ENCODE measurements at regions of chr6 and their contacts with region 1.

Region 1: GRCh38 chr6:56595490-56596122 is 47.1 kb downstream of the DST start:
- DNase-seq: peak; percentile 76
- H3K4me3 ChIP-seq: no peak overlapping the region
- H3K27ac ChIP-seq: no peak overlapping the region
- H3K4me1 ChIP-seq: no peaks in the 10 kb centered on the region
- H3K27me3 ChIP-seq: no peaks in the 10 kb centered on the region
- CTCF ChIP-seq: peak; percentile 54 to 61
- POLR2A ChIP-seq: no peak

Region 2: GRCh38 chr6:56314683-56315523 is 280.7 kb before region 1 on chr6:
- CTCF ChIA-PET with region 1: interaction called, 110 read pairs
- POLR2A ChIA-PET with region 1: no interaction called
- dilution Hi-C with region 1: no loop called
- intact Hi-C with region 1: loop called (anchors 1 kb)
- DNase-seq: peak; percentile 72
- H3K4me3 ChIP-seq: no peak overlapping the region
- H3K27ac ChIP-seq: no peak overlapping the region
- H3K4me1 ChIP-seq: no peaks in the 10 kb centered on the region
- H3K27me3 ChIP-seq: no peaks in the 10 kb centered on the region
- CTCF ChIP-seq: peak; percentile 62 to 67
- POLR2A ChIP-seq: no peak

Region 3: DNA sequence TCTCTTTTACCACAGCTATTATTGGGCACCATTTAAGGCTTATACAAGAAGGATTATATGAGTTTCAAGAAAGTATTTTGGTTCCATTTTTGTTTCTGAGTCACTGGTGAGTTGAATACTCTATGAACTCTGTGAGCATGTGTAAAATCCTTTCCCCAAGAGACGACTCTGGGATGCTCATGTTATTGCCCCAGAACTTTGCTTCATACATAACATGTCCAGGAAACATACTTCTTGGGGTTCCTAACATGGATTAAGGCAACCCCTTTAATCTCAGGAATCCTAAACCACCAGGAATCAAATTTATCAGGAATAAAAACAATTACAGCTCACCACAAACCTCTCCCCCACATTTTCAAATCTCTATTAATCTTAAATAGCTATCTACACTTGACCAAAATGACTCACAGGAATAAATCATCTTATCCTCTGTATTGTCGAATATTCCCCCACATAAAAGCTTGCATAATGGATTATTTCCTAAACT is 230.7 kb before region 1 on chr6:
- CTCF ChIA-PET with region 1: interaction called, 68 read pairs
- POLR2A ChIA-PET with region 1: no interaction called
- dilution Hi-C with region 1: no loop called
- intact Hi-C with region 1: no loop called
- DNase-seq: peak; percentile 48
- H3K4me3 ChIP-seq: no peak overlapping the region
- H3K27ac ChIP-seq: peak overlapping the region; percentile 16
- H3K4me1 ChIP-seq: peaks cover 76% of the 10 kb centered on the region
- H3K27me3 ChIP-seq: no peaks in the 10 kb centered on the region
- CTCF ChIP-seq: no peak
- POLR2A ChIP-seq: no peak

Region 4: GRCh38 chr6:56549014-56549413 is 46.6 kb before region 1 on chr6:
- CTCF ChIA-PET with region 1: interaction called, 22 read pairs
- POLR2A ChIA-PET with region 1: no interaction called
- dilution Hi-C with region 1: no loop called
- intact Hi-C with region 1: no loop called
- DNase-seq: peak; percentile 64
- H3K4me3 ChIP-seq: no peak overlapping the region
- H3K27ac ChIP-seq: no peak overlapping the region
- H3K4me1 ChIP-seq: no peaks in the 10 kb centered on the region
- H3K27me3 ChIP-seq: no peaks in the 10 kb centered on the region
- CTCF ChIP-seq: peak in 1 of 2 donors; percentile 32
- POLR2A ChIP-seq: no peak

Region 5: GRCh38 chr6:56581296-56581925 is 14.2 kb before region 1 on chr6:
- CTCF ChIA-PET with region 1: interaction called, 19 read pairs
- POLR2A ChIA-PET with region 1: no interaction called
- dilution Hi-C with region 1: no loop called
- intact Hi-C with region 1: no loop called
- DNase-seq: peak; percentile 30
- H3K4me3 ChIP-seq: no peak overlapping the region
- H3K27ac ChIP-seq: no peak overlapping the region
- H3K4me1 ChIP-seq: peaks cover 5% of the 10 kb centered on the region
- H3K27me3 ChIP-seq: no peaks in the 10 kb centered on the region
- CTCF ChIP-seq: no peak
- POLR2A ChIP-seq: no peak

Measured in endothelial cell of umbilical vein (primary cell).